ENCODE measurements at regions of chr9 and their contacts with region 1.

Region 1: GRCh38 chr9:102631559-102631958 is 363.6 kb upstream of the CYLC2 start:
- DNase-seq: no peak
- ATAC-seq: no peak
- H3K4me3 ChIP-seq: no peak overlapping the region
- H3K27ac ChIP-seq: no peak overlapping the region
- H3K4me1 ChIP-seq: no peaks in the 10 kb centered on the region
- H3K27me3 ChIP-seq: no peaks in the 10 kb centered on the region
- CTCF ChIP-seq: peak in 2 of 3 experiments; percentile 34 to 45; a peak in 3 of 6 replicates
- POLR2A ChIP-seq: no peak
- RAD21 ChIP-seq: 0 out of 2 replicates have a peak, but pooled peaks have one; percentile 23

Region 2: GRCh38 chr9:101907466-101907865 is 724.1 kb before region 1 on chr9:
- CTCF ChIA-PET with region 1: no interaction called
- POLR2A ChIA-PET with region 1: no interaction called
- RAD21 ChIA-PET with region 1: no interaction called
- intact Hi-C with region 1: no loop called
- DNase-seq: no peak
- ATAC-seq: no peak
- H3K4me3 ChIP-seq: no peak overlapping the region
- H3K27ac ChIP-seq: no peak overlapping the region
- H3K4me1 ChIP-seq: no peaks in the 10 kb centered on the region
- H3K27me3 ChIP-seq: no peaks in the 10 kb centered on the region
- CTCF ChIP-seq: no peak
- POLR2A ChIP-seq: no peak
- RAD21 ChIP-seq: no peak

Region 3: GRCh38 chr9:103431816-103432215 is 800.3 kb after region 1 on chr9:
- CTCF ChIA-PET with region 1: no interaction called
- POLR2A ChIA-PET with region 1: no interaction called
- RAD21 ChIA-PET with region 1: no interaction called
- intact Hi-C with region 1: no loop called
- DNase-seq: no peak
- ATAC-seq: no peak
- H3K4me3 ChIP-seq: no peak overlapping the region
- H3K27ac ChIP-seq: no peak overlapping the region
- H3K4me1 ChIP-seq: no peaks in the 10 kb centered on the region
- H3K27me3 ChIP-seq: no peaks in the 10 kb centered on the region
- CTCF ChIP-seq: no peak
- POLR2A ChIP-seq: no peak
- RAD21 ChIP-seq: no peak

Region 4: DNA sequence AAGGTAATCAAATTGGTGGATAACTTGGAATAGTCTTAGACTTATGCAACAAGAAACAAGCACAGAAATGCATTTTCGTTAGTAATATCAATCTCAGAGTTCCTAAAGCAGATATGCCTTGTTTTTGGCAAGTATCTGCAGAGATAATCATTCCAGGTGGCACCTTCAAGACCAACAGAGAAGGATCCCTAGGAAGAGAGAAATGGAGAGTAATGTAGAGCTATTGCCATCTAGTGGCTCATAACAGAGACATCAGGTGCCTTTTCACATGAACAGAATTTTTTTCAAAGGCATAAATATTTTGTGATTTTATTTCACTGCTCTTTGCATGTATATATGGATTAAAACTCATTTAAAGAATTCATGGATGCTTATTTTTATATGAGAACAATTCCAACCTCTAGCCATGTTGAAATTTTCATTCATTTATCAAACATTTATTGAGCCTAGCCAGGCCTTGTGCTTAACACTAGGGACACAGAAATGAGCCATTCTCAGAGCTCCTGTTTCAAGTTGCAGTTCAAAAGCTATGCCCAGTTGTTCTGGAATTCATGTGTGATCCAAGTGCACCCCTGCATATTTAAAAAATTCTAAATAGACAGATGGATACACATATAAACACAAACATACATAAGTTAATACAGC is 1755.0 kb after region 1 on chr9:
- CTCF ChIA-PET with region 1: no interaction called
- POLR2A ChIA-PET with region 1: no interaction called
- RAD21 ChIA-PET with region 1: no interaction called
- intact Hi-C with region 1: loop called (anchors 5 kb)
- DNase-seq: peak; percentile 22
- ATAC-seq: peak; percentile 70
- H3K4me3 ChIP-seq: no peak overlapping the region
- H3K27ac ChIP-seq: no peak overlapping the region
- H3K4me1 ChIP-seq: no peaks in the 10 kb centered on the region
- H3K27me3 ChIP-seq: peaks cover 5% of the 10 kb centered on the region; the same call in 1 of the 2 replicates
- CTCF ChIP-seq: peak; percentile 31 to 68 (median 61); a peak in 4 of 6 replicates
- POLR2A ChIP-seq: no peak
- RAD21 ChIP-seq: peak; percentile 69

Measured in HCT116 (cell line).